Heart left ventricle (tissue), 16 donors: ENCODE measurements at regions of chr5 and their contacts with region 1.

Region 1: GRCh38 chr5:16508730-16509531 is 43.3 kb upstream of the ZNF622 start:
- DNase-seq: peak; percentile 77 to 89 (median 79)
- ATAC-seq: peak; percentile 92 to 94 (median 93)
- H3K4me3 ChIP-seq: peak overlapping the region; percentile 27 to 62 (median 50)
- H3K27ac ChIP-seq: peak overlapping the region; percentile 66 to 96 (median 85)
- H3K4me1 ChIP-seq: peaks cover 0 to 24% (median 7%) of the 10 kb centered on the region in 12 donors
- H3K27me3 ChIP-seq: no peaks in the 10 kb centered on the region
- CTCF ChIP-seq: no peak
- POLR2A ChIP-seq: peak; percentile 69 to 77

Region 2: GRCh38 chr5:16477541-16477940 is 31.4 kb before region 1 on chr5:
- intact Hi-C with region 1: no loop called
- DNase-seq: no peak
- ATAC-seq: no peak
- H3K4me3 ChIP-seq: no peak overlapping the region
- H3K27ac ChIP-seq: no peak overlapping the region
- H3K4me1 ChIP-seq: peaks cover 0 to 30% (median 4%) of the 10 kb centered on the region in 12 donors
- H3K27me3 ChIP-seq: no peaks in the 10 kb centered on the region
- CTCF ChIP-seq: no peak
- POLR2A ChIP-seq: no peak

Region 3: DNA sequence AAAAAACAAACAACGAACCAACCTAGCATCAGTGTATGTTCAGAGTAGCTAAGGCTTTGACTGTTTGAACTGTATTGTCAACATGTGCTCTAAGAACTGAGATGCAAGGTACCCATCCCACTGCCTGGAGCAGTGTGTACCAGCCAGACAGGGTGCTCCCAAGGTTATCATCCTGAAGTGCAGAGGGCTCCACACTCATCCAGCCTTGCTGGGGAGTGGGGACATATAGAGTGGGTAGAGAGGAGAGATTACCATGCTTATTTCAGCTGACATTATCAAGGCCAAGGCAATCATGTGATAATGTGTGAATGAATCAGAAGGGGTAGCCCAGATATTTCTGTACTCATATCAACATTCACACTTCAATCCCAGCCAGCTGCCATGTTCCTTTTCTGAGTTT is 25.3 kb after region 1 on chr5:
- intact Hi-C with region 1: loop called in 1 of 10 experiments (anchors 2 kb)
- DNase-seq: peak in 3 of 5 donors; percentile 49 to 69 (median 67)
- ATAC-seq: peak; percentile 83 to 95 (median 90)
- H3K4me3 ChIP-seq: no peak overlapping the region
- H3K27ac ChIP-seq: peak overlapping the region in 9 of 12 donors; percentile 19 to 95 (median 44)
- H3K4me1 ChIP-seq: peaks cover 0 to 70% (median 9%) of the 10 kb centered on the region in 12 donors
- H3K27me3 ChIP-seq: no peaks in the 10 kb centered on the region
- CTCF ChIP-seq: no peak
- POLR2A ChIP-seq: peak in 1 of 2 donors; percentile 17

Region 4: GRCh38 chr5:16600397-16600796 is 91.5 kb after region 1 on chr5:
- intact Hi-C with region 1: no loop called
- DNase-seq: peak; percentile 76 to 89 (median 80)
- ATAC-seq: peak; percentile 65 to 89 (median 78)
- H3K4me3 ChIP-seq: no peak overlapping the region
- H3K27ac ChIP-seq: peak overlapping the region in 2 of 12 donors; percentile 20 to 22
- H3K4me1 ChIP-seq: peaks cover 0 to 42% (median 12%) of the 10 kb centered on the region in 12 donors
- H3K27me3 ChIP-seq: no peaks in the 10 kb centered on the region
- CTCF ChIP-seq: no peak
- POLR2A ChIP-seq: no peak